Stomach (tissue), 19 donors: ENCODE measurements at regions of chr19 and their contacts with region 1.

Region 1: DNA sequence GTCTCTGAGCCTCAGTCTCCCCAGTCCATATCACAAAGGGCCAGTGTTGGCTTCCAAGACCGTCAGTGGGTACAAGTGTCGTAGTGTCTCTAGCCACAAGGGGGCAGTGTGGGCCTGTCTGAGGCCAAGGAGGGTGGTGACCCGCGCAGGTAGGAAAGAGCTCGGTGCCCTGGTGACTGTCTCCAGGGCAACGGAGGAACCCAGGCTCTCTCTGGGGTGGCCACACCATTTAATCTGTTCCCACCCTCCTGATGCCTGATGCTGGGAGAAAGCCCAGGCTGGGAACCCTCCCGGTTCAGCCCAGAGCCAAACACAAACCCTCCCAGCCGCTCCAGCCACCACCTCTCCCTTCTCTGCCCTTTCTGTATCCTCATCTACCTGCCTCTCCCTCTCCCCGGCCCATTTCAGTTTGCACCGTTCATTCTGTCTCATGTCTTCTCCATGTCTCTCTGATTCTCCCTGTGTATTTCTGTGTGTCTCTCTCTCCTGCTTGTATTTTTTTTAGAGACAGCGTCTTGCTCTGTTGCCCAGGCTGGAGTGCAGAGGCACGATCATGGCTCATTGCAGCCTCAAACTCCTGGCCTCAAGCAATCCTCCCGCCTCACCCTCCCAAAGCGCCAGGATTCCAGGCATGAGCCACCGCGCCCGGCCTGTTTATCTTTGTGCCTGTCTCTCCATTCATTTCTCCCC is 17.5 kb upstream of the MEIS3 start:
- DNase-seq: peak; percentile 91
- H3K4me3 ChIP-seq: no peak overlapping the region
- H3K27ac ChIP-seq: peak overlapping the region in 1 of 5 donors; percentile 10
- H3K4me1 ChIP-seq: peaks cover 0 to 7% (median 5%) of the 10 kb centered on the region in 4 donors
- H3K27me3 ChIP-seq: peaks cover 0 to 85% (median 27%) of the 10 kb centered on the region in 3 donors
- CTCF ChIP-seq: peak in 5 of 7 experiments; percentile 67 to 95 (median 88)
- EP300 ChIP-seq: no peak
- POLR2A ChIP-seq: no peak

Region 2: DNA sequence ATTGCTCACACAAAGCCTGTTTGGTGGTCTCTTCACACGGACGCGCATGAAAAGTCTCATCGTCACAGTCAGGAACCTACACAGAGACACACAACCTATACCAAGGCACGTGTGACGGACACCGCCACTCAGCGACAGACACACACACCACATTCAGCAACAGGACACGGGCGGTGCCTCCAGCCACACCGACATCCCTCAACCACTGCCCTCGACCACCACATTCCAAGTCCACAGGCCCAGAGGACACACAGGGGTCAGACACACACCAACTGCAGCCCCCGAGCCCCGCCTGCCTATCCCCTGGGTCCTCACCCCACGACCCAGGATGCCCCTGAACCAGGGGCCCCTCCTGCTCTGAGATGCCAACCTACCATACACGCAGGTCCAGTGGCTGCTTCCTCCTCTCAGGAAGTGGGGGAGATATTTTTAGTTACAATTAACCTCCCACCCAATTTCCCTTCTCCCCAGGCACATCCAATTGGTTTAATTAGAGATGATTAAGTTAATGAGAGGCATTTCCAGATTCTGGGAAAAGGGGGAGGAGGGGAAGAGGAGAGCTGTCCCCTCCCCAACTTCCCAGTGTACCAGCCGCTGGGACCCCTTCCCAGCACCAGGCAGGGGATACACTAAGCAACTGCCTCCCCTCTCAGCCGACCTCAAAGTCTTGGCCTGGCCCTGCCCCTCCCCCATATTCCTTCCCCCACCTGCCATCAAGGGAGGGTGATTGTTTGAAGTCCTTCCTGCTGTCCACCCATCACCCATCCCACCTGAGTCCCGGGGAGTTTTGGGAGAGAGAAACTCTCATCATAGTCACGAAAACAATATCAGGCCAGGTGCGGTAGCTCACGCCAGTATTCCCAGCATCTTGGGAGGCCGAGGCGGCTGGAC is 37.9 kb before region 1 on chr19:
- intact Hi-C with region 1: no loop called
- DNase-seq: no peak
- H3K4me3 ChIP-seq: no peak overlapping the region
- H3K27ac ChIP-seq: no peak overlapping the region
- H3K4me1 ChIP-seq: no peaks in the 10 kb centered on the region
- H3K27me3 ChIP-seq: peaks cover 0 to 52% (median 6%) of the 10 kb centered on the region in 3 donors
- CTCF ChIP-seq: no peak
- EP300 ChIP-seq: no peak
- POLR2A ChIP-seq: no peak

Region 3: GRCh38 chr19:47707135-47707925 is 270.5 kb after region 1 on chr19:
- intact Hi-C with region 1: loop called (anchors 5 kb)
- DNase-seq: peak; percentile 82 to 88
- H3K4me3 ChIP-seq: no peak overlapping the region
- H3K27ac ChIP-seq: no peak overlapping the region
- H3K4me1 ChIP-seq: peaks cover 0 to 5% (median 0%) of the 10 kb centered on the region in 4 donors
- H3K27me3 ChIP-seq: peaks cover 0 to 19% (median 0%) of the 10 kb centered on the region in 3 donors
- CTCF ChIP-seq: peak in 5 of 7 experiments; percentile 47 to 84 (median 77)
- EP300 ChIP-seq: no peak
- POLR2A ChIP-seq: no peak